ENCODE measurements at regions of chr3 and their contacts with region 1.

Region 1: GRCh38 chr3:26703519-26703918 is 80.9 kb downstream of the LRRC3B start:
- DNase-seq: no peak
- ATAC-seq: no peak
- H3K4me3 ChIP-seq: no peak overlapping the region
- H3K27ac ChIP-seq: no peak overlapping the region
- H3K4me1 ChIP-seq: no peaks in the 10 kb centered on the region
- H3K27me3 ChIP-seq: no peaks in the 10 kb centered on the region

Region 2: GRCh38 chr3:25843332-25843731 is 860.2 kb before region 1 on chr3:
- intact Hi-C with region 1: loop called in 1 of 4 experiments (anchors 10 kb)
- DNase-seq: no peak
- ATAC-seq: no peak
- H3K4me3 ChIP-seq: no peak overlapping the region
- H3K27ac ChIP-seq: no peak overlapping the region
- H3K4me1 ChIP-seq: no peaks in the 10 kb centered on the region
- H3K27me3 ChIP-seq: no peaks in the 10 kb centered on the region

Region 3: DNA sequence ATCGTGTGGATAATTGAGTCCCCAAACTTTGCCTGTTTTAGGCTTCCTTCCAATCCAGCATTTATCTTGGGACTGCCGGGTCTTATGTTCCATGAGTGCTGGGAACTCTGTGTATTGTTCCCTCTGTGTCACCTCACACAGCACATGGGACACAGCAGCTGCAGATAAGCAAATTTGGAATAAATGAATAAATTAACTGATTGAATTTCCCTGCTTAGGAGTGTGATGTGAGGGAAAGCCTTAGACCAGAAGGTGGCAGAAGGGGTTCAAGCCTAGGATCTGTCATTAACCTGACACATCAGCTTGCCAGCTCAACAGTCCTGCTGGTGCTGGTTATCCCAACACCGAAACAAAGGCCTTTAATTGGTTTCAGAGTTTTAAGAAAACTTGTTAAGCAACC is 799.3 kb before region 1 on chr3:
- intact Hi-C with region 1: loop called in 1 of 4 experiments (anchors 10 kb)
- DNase-seq: no peak
- ATAC-seq: peak; percentile 63 to 83
- H3K4me3 ChIP-seq: no peak overlapping the region
- H3K27ac ChIP-seq: no peak overlapping the region
- H3K4me1 ChIP-seq: no peaks in the 10 kb centered on the region
- H3K27me3 ChIP-seq: no peaks in the 10 kb centered on the region